Dorsolateral prefrontal cortex (tissue), 120 donors: ENCODE measurements at regions of chr2 and their contacts with region 1.

Region 1: DNA sequence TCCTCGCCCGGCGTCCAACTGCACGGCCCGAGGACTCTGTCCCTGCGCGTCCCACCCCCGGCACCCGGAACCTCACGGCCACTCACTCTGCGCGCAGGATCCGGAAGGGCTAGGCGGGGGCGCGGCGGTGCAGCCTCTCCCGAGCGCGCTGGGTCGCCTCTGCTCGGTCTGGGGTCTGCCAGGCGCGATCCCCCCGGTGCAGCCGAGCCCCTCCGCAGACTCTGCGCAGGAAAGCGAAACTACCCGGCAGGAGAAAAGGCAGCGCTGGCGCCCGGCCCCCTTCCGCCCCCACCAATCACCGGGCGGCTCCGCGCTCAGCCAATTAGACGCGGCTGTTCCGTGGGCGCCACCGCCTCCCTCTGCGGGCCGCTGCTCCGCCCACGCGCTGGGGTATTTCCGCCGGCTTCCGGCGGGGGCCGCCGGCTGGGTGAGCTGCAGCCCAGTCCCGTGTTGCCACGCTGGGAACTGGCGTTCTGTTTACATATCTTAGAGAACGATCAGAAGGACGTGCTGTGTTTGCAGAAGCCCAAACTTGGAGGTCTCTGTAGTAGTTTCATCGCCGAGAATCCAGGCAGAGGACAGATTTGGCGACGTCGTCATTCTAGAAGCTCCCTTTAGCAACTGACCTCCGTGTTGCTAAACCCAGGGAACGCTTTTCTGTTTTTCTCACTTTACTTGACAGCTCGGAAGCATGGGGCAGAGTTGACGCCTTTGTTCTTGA is at the start of gene STAT1:
- DNase-seq: peak; percentile 84 to 97 (median 91)
- H3K4me3 ChIP-seq: peak within 1 kb of the TSS; percentile 65 to 100 (median 91)
- H3K27ac ChIP-seq: peak within 1 kb of the TSS; percentile 61 to 99 (median 95)
- H3K27me3 ChIP-seq: no peaks in the 10 kb centered on the region
- CTCF ChIP-seq: peak in 40 of 56 donors; percentile 7 to 61 (median 28)
- total RNA-seq, gene STAT1: 23.0 to 286 (median 57.5) TPM

Region 2: GRCh38 chr2:190534310-190535120 is 479.6 kb before region 1 on chr2 and contains the start of gene NEMP2:
- intact Hi-C with region 1: loop called in 1 of 2 experiments (anchors 10 kb)
- DNase-seq: peak; percentile 55 to 88 (median 66)
- H3K4me3 ChIP-seq: peak within 1 kb of the TSS; percentile 56 to 96 (median 84)
- H3K27ac ChIP-seq: peak within 1 kb of the TSS; percentile 82 to 99 (median 96)
- H3K27me3 ChIP-seq: no peaks in the 10 kb centered on the region
- CTCF ChIP-seq: peak in 25 of 56 donors; percentile 9 to 61 (median 28)
- total RNA-seq, gene NEMP2: 1.1 to 9.4 (median 3.7) TPM

Region 3: GRCh38 chr2:190880378-190881073 is 133.6 kb before region 1 on chr2 and contains the start of gene GLS:
- intact Hi-C with region 1: loop called (anchors 2 to 5 kb)
- DNase-seq: peak; percentile 94 to 99 (median 98)
- H3K4me3 ChIP-seq: peak within 1 kb of the TSS; percentile 72 to 98 (median 89)
- H3K27ac ChIP-seq: peak within 1 kb of the TSS; percentile 76 to 99 (median 96)
- H3K27me3 ChIP-seq: no peaks in the 10 kb centered on the region
- CTCF ChIP-seq: peak in 1 of 56 donors; percentile 12
- total RNA-seq, gene GLS: 130 to 387 (median 309) TPM